HCT116 (cell line): ENCODE measurements at regions of chr3 and their contacts with region 1.

Region 1: DNA sequence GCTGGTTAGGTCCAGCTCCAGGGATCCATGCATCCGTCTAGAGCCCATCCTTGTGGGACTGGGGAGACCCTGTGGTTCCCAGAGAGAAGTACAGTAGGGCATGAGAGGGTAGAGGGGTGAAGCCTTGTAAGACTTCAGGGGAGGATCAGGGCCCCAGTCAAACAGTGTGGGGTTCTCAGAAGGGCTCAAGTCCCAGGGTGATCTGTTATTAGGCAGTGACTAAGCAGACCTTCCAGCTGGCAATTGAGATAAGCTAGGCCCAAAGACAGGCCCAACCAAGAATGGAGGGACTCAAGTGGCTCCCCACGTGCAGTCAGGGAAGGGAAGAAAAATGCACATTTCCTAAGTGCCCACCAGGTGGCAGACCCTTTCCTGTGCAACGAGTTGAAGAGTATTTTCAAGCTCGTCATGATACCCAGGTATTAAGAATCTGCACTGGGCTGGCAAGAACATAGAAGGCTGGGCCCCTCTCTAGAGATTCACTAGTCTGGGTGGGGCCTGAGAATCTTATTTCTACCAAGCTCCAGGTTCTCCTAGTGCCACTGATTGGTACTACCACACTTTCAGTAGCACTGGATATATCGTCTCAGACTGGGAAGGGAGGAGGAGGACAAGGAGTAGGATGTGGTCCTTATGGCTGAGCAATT is 240.8 kb downstream of the NR1D2 start:
- DNase-seq: peak; percentile 69
- ATAC-seq: peak; percentile 89
- H3K4me3 ChIP-seq: no peak overlapping the region
- H3K27ac ChIP-seq: no peak overlapping the region
- H3K4me1 ChIP-seq: no peaks in the 10 kb centered on the region
- H3K27me3 ChIP-seq: no peaks in the 10 kb centered on the region
- CTCF ChIP-seq: peak; percentile 58 to 75 (median 72)
- POLR2A ChIP-seq: no peak
- RAD21 ChIP-seq: peak; percentile 73

Region 2: GRCh38 chr3:24237971-24238767 is 52.3 kb after region 1 on chr3:
- CTCF ChIA-PET with region 1: interaction called, 5 read pairs
- POLR2A ChIA-PET with region 1: interaction called, 3 read pairs
- RAD21 ChIA-PET with region 1: no interaction called
- intact Hi-C with region 1: loop called (anchors 1 kb)
- DNase-seq: peak; percentile 75
- ATAC-seq: peak; percentile 91
- H3K4me3 ChIP-seq: no peak overlapping the region
- H3K27ac ChIP-seq: no peak overlapping the region
- H3K4me1 ChIP-seq: peaks cover 7 to 17% of the 10 kb centered on the region in 2 experiments; a peak in 2 of 4 replicates
- H3K27me3 ChIP-seq: no peaks in the 10 kb centered on the region
- CTCF ChIP-seq: peak; percentile 76 to 93 (median 82)
- POLR2A ChIP-seq: no peak
- RAD21 ChIP-seq: peak; percentile 89

Region 3: DNA sequence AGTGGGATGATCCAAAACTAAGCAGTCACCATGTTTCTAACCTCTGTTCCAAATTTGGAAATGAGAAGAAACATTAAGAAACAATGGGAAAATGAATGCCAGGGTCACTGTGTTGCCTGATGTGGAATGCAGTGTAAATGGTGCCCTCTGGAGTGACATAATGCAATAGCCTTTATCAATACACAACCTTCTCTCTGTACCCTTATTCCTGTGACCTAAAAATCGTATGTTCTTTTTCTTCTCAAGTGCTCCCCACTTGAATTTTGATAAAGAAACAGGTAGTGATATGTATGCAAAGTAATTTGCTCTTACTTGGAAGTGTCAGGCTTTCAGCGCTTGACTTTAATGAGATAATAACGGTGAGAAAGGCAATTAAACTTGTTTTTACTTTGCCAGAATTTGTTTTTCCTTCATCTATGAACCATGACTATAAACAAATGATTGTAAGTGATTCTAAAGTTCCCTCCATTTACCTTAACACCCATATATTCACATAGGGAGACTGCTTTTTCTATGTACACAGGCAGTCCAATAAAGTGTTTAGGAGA is 454.5 kb after region 1 on chr3:
- CTCF ChIA-PET with region 1: no interaction called
- POLR2A ChIA-PET with region 1: no interaction called
- RAD21 ChIA-PET with region 1: no interaction called
- intact Hi-C with region 1: loop called (anchors 5 kb)
- DNase-seq: peak; percentile 27
- ATAC-seq: peak; percentile 94
- H3K4me3 ChIP-seq: no peak overlapping the region
- H3K27ac ChIP-seq: no peak overlapping the region
- H3K4me1 ChIP-seq: no peaks in the 10 kb centered on the region
- H3K27me3 ChIP-seq: no peaks in the 10 kb centered on the region
- CTCF ChIP-seq: peak; percentile 52 to 69 (median 59); a peak in 5 of 6 replicates
- POLR2A ChIP-seq: no peak
- RAD21 ChIP-seq: peak; percentile 79

Region 4: DNA sequence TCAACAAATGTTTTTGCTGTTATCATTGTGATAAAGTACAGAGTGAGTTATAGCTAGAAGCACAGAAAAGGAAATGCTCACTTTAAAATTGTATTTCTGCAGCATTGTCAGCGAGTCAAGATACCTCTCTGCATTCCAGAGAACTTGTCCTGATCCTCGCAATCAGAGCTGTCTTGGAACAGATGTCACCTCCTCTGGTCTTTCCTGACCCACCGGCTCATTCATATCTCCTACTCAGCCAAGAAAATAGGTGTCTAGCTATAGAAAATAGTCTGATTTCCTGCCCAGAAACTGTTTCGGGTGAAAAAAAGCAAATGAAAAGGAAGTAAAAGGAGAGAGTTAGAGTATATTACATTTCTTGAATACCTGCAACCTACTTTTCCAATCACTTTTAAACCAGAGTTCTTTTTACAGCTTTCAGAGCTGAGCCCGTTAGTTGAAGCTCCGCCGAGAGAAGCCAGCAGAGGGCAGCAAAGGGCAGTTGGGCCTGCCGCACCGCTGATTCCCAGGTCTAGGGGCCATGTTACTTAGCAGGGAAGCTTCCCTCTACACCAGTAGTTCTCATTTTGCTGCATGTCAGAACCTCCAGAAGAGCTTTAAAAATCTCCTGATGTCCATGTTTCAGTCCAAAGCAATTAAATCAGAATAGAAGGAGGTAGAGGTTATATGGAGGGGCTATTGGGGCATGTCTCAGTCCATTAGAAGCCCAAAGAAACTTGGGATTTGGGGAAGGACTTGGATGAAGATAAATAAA is 494.5 kb after region 1 on chr3:
- CTCF ChIA-PET with region 1: interaction called, 11 read pairs
- POLR2A ChIA-PET with region 1: no interaction called
- RAD21 ChIA-PET with region 1: no interaction called
- intact Hi-C with region 1: loop called (anchors 2 kb)
- DNase-seq: peak; percentile 42
- ATAC-seq: peak; percentile 96
- H3K4me3 ChIP-seq: no peak overlapping the region
- H3K27ac ChIP-seq: no peak overlapping the region
- H3K4me1 ChIP-seq: peaks cover 0 to 6% of the 10 kb centered on the region in 2 experiments; a peak in 1 of 4 replicates
- H3K27me3 ChIP-seq: no peaks in the 10 kb centered on the region
- CTCF ChIP-seq: peak; percentile 48 to 93 (median 91); a peak in 5 of 6 replicates
- POLR2A ChIP-seq: no peak
- RAD21 ChIP-seq: peak; percentile 59

Region 5: GRCh38 chr3:24832878-24833277 is 647.0 kb after region 1 on chr3:
- CTCF ChIA-PET with region 1: no interaction called
- POLR2A ChIA-PET with region 1: no interaction called
- RAD21 ChIA-PET with region 1: no interaction called
- intact Hi-C with region 1: no loop called
- DNase-seq: no peak
- ATAC-seq: no peak
- H3K4me3 ChIP-seq: no peak overlapping the region
- H3K27ac ChIP-seq: no peak overlapping the region
- H3K4me1 ChIP-seq: no peaks in the 10 kb centered on the region
- H3K27me3 ChIP-seq: peaks cover 7% of the 10 kb centered on the region
- CTCF ChIP-seq: no peak
- POLR2A ChIP-seq: no peak
- RAD21 ChIP-seq: no peak